Activated CD4-positive, alpha-beta memory T cell treated with anti-CD3 and anti-CD28 coated beads for 36 hours (primary cell): ENCODE measurements at regions of chr4 and their contacts with region 1.

Region 1: DNA sequence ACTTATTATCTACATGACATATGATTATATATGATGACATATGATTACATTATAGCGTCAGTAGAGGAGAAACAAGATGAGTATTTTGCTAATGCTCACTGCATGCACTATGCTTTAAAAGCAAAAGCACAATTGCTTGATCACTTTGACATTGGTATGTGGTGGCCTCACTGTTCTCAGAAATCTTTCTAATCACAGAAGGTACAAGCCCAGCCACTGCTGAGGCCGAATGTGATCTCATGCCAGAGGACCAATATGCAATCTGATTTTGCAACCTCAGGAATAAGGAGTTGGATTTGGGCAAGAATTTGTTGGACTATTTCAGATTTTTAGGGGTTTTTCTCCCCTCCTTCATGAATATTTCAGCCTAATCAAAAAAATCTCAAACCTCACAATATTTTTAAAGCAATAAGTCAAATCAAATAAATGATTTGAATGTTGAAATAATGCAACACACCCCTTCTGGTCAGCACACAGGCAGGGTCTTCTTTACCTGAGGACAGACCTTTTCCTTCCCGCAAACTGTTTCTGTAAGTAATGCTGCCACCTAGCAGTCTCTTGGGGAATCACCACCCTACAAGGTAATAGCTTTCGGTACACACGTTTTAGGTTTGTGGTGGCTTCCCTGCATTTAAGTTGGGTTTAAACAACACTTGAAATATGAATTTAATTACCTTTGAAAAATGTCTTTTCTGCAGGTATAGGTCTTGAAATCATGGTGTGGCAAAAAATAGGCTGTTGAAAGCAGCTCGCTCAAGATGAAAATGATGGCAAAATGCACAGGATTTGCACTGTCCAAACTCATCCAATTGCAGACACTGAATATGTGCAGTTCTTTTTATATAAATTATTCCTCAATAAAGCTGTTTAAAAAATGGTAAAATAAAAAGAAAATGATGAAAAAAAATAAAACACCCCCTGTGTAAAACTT is 4.8 kb upstream of the CXCL13 start:
- DNase-seq: peak; percentile 43
- H3K4me3 Mint-ChIP-seq: no peak overlapping the region
- H3K27ac Mint-ChIP-seq: no peak overlapping the region
- H3K4me1 Mint-ChIP-seq: peaks cover 18% of the 10 kb centered on the region
- H3K27me3 Mint-ChIP-seq: peaks cover 24% of the 10 kb centered on the region

Region 2: DNA sequence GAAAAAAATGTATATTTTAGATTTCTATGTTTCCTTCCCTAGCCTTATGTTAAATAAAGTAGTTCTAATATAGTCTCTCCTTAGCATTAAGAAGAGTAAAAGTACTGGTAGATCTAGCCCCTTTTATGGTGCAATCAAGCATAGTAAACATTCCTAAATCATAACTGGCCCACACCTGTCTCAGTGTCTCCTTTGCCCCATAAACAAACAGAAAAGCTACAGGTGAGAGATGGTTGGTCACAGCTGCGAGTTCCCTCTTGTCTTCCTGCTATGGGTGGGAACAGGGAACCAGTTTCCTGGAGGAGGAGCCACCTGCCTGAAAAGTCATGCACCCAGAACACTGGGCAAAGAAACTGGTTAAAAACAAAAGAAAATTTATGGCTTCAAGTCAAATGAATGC is 719.4 kb before region 1 on chr4:
- CTCF ChIA-PET with region 1: no interaction called
- POLR2A ChIA-PET with region 1: no interaction called
- intact Hi-C with region 1: no loop called
- DNase-seq: no peak
- H3K4me3 Mint-ChIP-seq: no peak overlapping the region
- H3K27ac Mint-ChIP-seq: no peak overlapping the region
- H3K4me1 Mint-ChIP-seq: no peaks in the 10 kb centered on the region
- H3K27me3 Mint-ChIP-seq: peaks cover 13% of the 10 kb centered on the region

Region 3: DNA sequence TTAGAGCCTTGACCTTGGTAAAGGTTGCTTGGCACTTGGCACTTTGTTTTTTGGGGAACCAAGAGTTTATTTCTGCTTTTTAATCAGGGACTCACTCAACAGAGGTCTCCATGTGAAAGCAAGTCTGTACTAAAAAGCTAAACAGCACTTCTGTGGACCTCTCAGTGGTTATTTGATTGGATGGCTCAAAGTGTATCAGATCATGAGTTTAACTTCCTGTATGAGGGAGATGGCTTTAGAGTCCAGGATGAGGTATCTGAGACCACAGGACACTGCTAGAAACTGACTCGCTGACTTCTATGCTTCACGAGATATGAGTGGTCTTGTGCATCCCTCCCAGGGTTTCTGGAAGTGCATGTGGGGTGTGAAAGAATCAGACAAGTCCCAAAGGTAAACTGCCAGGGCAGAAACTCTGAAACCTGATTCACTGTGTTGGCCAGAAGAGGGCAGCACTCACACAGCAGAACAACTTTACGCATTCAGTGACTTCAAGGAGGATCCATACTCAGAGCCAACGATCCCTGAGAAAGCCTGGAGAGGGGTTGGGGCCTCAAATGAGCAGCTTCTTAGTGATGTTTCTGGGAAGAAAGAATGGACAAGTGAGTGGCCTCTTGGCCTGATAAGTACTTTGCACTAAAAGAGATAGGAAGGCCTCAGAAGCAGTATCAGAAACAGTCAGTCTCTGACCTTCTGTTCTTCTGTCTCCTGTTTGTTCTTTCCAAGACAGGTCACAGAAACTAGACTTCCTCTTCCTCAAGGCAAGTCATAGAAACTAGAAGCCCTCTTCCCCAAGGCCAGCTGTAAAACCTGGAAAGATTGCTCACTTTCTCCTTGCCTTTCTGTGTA is 215.4 kb before region 1 on chr4:
- CTCF ChIA-PET with region 1: interaction called, 24 read pairs
- POLR2A ChIA-PET with region 1: no interaction called
- intact Hi-C with region 1: loop called (anchors 1 kb)
- DNase-seq: peak; percentile 71
- H3K4me3 Mint-ChIP-seq: no peak overlapping the region
- H3K27ac Mint-ChIP-seq: no peak overlapping the region
- H3K4me1 Mint-ChIP-seq: peaks cover 2% of the 10 kb centered on the region
- H3K27me3 Mint-ChIP-seq: no peaks in the 10 kb centered on the region

Region 4: DNA sequence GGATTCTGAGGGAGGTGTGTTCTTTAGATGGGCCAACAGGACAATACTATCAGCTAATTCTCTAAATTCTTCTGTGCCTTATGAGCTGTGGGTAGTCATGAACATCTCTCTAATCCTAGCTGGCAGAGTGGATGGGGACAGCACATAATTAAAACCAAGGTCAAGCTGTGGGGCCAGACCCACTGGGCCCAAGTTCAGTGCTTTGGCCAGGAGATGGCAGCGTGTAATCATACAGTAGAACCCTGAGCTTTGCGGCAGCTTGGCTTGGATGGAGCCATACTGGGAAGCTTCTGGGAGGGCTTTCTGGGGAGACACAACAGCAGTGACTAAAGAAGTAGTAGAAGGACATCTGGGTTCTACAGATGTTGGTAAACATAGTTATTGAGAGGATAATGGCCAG is 135.5 kb before region 1 on chr4:
- CTCF ChIA-PET with region 1: interaction called, 206 read pairs
- POLR2A ChIA-PET with region 1: interaction called, 4 read pairs
- intact Hi-C with region 1: loop called (anchors 1 kb)
- DNase-seq: peak; percentile 53
- H3K4me3 Mint-ChIP-seq: no peak overlapping the region
- H3K27ac Mint-ChIP-seq: no peak overlapping the region
- H3K4me1 Mint-ChIP-seq: no peaks in the 10 kb centered on the region
- H3K27me3 Mint-ChIP-seq: peaks cover 14% of the 10 kb centered on the region

Region 5: DNA sequence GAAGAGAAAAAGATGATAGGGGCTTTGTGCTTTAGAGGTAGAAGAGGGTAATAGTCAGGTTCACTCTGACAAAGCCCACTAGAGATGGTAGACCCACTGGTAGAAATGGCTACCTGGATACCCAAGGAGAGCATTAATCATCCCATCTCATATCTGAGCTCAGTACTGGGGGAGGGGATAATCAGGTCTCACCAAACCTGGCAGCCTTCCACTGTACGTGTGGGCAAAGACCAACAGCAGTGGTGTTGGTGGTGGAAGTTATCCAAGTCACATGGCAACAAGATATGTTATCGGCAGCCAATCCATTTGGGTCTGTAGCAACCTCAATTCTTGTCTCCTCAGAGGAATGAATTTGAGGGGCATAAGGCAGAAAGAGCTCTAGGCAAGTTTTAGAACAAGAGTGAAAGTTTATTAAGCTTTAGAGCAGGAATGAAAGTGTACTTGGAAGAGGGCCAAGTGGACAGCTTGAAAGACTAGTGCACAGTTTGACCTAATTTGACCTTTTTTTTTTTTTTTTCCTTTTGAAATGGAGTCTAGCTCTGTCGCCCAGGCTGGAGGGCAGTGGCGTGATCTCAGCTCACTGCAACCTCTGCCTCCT is 62.1 kb before region 1 on chr4:
- CTCF ChIA-PET with region 1: interaction called, 13 read pairs
- POLR2A ChIA-PET with region 1: no interaction called
- intact Hi-C with region 1: no loop called
- DNase-seq: peak; percentile 15
- H3K4me3 Mint-ChIP-seq: no peak overlapping the region
- H3K27ac Mint-ChIP-seq: no peak overlapping the region
- H3K4me1 Mint-ChIP-seq: peaks cover 19% of the 10 kb centered on the region
- H3K27me3 Mint-ChIP-seq: peaks cover 24% of the 10 kb centered on the region

Region 6: DNA sequence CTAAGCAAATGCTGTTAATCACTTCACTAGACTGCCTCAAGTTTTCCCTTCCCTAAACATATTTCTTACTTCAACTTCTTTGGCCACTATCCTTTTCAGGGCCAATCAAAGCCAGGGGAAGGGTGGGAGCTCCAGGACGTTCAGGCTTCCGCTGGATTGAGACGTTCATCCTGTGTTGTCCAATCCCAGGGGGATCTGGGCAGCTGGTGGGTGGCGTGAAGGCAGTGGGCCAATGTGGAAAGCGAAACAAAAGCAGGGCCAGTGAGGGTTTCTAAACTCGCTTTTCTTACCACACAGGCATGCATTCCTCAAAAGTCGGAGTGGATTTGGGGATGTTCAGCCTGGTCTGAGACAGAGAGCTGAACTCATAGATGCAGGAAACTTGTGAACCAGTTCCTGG is 12.5 kb after region 1 on chr4:
- CTCF ChIA-PET with region 1: interaction called, 78 read pairs
- POLR2A ChIA-PET with region 1: no interaction called
- intact Hi-C with region 1: no loop called
- DNase-seq: no peak
- H3K4me3 Mint-ChIP-seq: no peak overlapping the region
- H3K27ac Mint-ChIP-seq: no peak overlapping the region
- H3K4me1 Mint-ChIP-seq: no peaks in the 10 kb centered on the region
- H3K27me3 Mint-ChIP-seq: peaks cover 10% of the 10 kb centered on the region